ENCODE measurements at regions of chr10 and their contacts with region 1.

Region 1: GRCh38 chr10:99845837-99846382 is 63.5 kb downstream of the ABCC2 start:
- DNase-seq: peak; percentile 74 to 75
- H3K4me3 ChIP-seq: no peak overlapping the region
- H3K4me3 Mint-ChIP-seq: no peak overlapping the region
- H3K27ac Mint-ChIP-seq: no peak overlapping the region
- H3K4me1 ChIP-seq: peaks cover 19% of the 10 kb centered on the region
- H3K4me1 Mint-ChIP-seq: peaks cover 17% of the 10 kb centered on the region
- H3K27me3 ChIP-seq: no peaks in the 10 kb centered on the region
- H3K27me3 Mint-ChIP-seq: no peaks in the 10 kb centered on the region
- CTCF ChIP-seq: peak; percentile 84 to 86

Region 2: DNA sequence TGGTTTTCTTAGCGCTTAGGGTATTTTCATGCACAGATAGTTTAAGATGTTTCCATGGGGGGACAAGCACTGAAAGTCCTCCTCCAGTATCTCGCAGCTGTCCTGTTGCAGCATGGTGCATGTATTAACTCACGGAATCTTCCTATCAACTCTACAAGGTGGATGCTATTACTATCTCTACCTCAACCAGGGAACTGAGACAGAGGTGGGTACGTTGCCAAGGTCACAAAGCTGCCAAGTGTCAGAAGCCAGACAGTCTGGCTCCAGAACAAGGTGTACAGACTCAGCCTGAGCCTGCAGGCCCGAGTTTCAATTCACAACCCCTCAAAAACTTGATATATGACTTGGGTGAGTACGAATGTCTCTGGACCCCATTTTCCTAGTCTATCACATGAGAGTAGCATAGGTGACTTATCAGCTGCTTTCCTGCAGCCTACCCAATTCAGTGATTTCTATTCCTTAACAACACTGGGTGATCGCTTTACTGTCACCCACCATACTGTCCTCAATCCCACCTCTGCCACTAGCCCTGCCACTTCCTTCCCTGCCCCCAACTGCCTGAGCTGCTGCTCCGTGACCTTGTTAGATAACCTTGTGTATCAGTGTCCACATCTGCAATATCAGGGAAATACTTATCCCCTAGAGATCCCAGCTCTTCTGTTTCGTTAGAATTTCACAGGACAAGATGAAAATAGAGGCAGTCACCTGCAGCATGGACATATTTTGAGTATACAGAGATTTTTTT is 28.6 kb after region 1 on chr10:
- CTCF ChIA-PET with region 1: interaction called, 5 read pairs
- POLR2A ChIA-PET with region 1: no interaction called
- intact Hi-C with region 1: loop called (anchors 2 kb)
- DNase-seq: no peak
- H3K4me3 ChIP-seq: no peak overlapping the region
- H3K4me3 Mint-ChIP-seq: no peak overlapping the region
- H3K27ac Mint-ChIP-seq: no peak overlapping the region
- H3K4me1 ChIP-seq: peaks cover 16% of the 10 kb centered on the region
- H3K4me1 Mint-ChIP-seq: peaks cover 23% of the 10 kb centered on the region
- H3K27me3 ChIP-seq: no peaks in the 10 kb centered on the region
- H3K27me3 Mint-ChIP-seq: no peaks in the 10 kb centered on the region
- CTCF ChIP-seq: no peak

Region 3: DNA sequence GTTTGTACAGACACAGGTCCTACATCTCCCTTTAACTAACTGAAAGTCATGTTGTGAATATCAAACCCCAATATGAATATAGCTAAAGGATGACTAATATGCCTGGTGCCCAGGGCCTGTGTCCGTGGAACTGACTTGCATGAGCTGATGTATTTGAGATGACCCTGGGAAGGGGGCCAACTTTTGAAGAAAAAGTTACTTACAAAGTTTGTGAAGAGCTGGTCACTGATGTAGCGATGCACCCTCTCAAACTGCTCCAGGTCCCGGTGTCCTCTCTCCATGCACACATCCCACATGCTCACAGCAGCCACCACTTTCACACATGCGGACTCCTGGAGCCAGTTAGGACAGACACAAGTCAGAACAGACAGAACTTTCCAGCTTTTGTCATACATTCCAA is 42.7 kb after region 1 on chr10:
- CTCF ChIA-PET with region 1: no interaction called
- POLR2A ChIA-PET with region 1: no interaction called
- intact Hi-C with region 1: loop called (anchors 5 kb)
- DNase-seq: no peak
- H3K4me3 ChIP-seq: no peak overlapping the region
- H3K4me3 Mint-ChIP-seq: no peak overlapping the region
- H3K27ac Mint-ChIP-seq: no peak overlapping the region
- H3K4me1 ChIP-seq: no peaks in the 10 kb centered on the region
- H3K4me1 Mint-ChIP-seq: no peaks in the 10 kb centered on the region
- H3K27me3 ChIP-seq: no peaks in the 10 kb centered on the region
- H3K27me3 Mint-ChIP-seq: no peaks in the 10 kb centered on the region
- CTCF ChIP-seq: no peak

Region 4: DNA sequence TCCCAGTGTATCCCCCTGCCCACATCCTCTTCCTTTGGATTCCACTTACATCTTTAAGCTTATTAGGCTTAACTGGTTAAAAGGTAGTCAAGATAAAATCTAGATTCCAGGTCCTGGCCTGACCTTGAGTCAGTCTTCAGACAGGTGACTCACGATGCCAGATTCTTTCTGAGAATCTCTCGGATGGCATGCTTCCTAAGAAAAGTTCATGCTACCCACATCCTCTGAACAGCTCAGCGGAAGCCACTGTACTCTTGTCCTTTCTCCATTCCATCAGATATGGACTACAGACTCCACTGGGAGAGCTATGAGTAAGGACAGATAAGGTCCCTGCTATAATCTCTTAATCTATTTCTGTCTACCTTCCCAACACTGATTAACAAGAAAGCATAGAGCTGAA is 120.4 kb after region 1 on chr10:
- CTCF ChIA-PET with region 1: interaction called, 10 read pairs
- POLR2A ChIA-PET with region 1: interaction called, 3 read pairs
- intact Hi-C with region 1: loop called (anchors 2 kb)
- DNase-seq: peak; percentile 44 to 64
- H3K4me3 ChIP-seq: no peak overlapping the region
- H3K4me3 Mint-ChIP-seq: peak overlapping the region; percentile 34
- H3K27ac Mint-ChIP-seq: no peak overlapping the region
- H3K4me1 ChIP-seq: peaks cover 16% of the 10 kb centered on the region
- H3K4me1 Mint-ChIP-seq: peaks cover 14% of the 10 kb centered on the region
- H3K27me3 ChIP-seq: no peaks in the 10 kb centered on the region
- H3K27me3 Mint-ChIP-seq: no peaks in the 10 kb centered on the region
- CTCF ChIP-seq: no peak

Region 5: GRCh38 chr10:100100651-100101184 is 254.8 kb after region 1 on chr10:
- CTCF ChIA-PET with region 1: interaction called, 3 read pairs
- POLR2A ChIA-PET with region 1: no interaction called
- intact Hi-C with region 1: loop called (anchors 1 kb)
- DNase-seq: peak in 1 of 2 experiments; percentile 58
- H3K4me3 ChIP-seq: no peak overlapping the region
- H3K4me3 Mint-ChIP-seq: no peak overlapping the region
- H3K27ac Mint-ChIP-seq: no peak overlapping the region
- H3K4me1 ChIP-seq: peaks cover 19% of the 10 kb centered on the region
- H3K4me1 Mint-ChIP-seq: peaks cover 19% of the 10 kb centered on the region
- H3K27me3 ChIP-seq: no peaks in the 10 kb centered on the region
- H3K27me3 Mint-ChIP-seq: no peaks in the 10 kb centered on the region
- CTCF ChIP-seq: peak; percentile 40 to 72

Region 6: DNA sequence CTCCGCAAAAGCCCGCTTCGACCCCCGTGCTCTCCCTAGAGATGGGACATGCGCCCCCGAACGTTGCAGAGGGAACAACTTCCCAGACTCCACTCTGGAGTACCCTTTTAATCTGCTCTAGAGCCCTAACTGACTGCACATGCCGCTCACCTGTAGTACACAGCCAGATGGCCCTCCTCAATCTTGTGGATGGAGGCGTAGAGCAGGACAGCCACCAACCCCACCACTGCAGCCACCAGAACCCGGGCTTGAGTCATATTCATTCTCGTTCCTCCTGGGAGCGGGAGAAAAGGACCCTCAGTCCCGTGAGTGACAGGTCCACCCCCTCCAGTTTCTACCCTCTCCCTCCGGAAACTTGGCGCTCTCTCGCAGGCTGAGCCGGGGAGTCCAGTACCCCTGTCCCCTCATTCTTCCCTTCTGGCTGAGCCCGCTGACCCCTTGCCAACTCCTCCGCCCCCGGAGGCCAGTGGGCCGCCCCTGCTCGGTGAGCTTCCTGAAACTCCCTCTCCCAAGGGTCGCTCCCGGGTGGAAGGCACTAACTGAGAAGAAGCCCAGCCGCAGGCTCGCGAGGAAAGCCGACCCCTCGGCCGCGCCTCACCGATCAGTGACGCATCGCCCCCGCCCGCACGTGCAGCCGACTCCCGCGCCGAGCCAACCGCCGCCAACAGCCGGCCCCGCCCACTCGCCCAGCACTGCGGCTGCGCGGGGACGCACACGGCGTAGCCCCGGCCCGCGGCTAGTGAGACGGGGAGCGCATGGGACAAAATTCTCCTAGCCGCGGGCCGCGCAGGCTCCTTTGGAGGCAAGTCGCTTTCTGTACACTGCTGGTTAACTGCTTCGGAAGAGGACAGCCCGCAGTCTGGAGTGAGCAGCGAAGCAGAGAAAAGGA is 339.7 kb after region 1 on chr10 and contains the start of gene ERLIN1:
- CTCF ChIA-PET with region 1: no interaction called
- POLR2A ChIA-PET with region 1: no interaction called
- intact Hi-C with region 1: loop called (anchors 5 kb)
- DNase-seq: peak; percentile 90 to 97
- H3K4me3 ChIP-seq: peak within 1 kb of the TSS; percentile 71
- H3K4me3 Mint-ChIP-seq: peak within 1 kb of the TSS; percentile 76
- H3K27ac Mint-ChIP-seq: peak within 1 kb of the TSS; percentile 83
- H3K4me1 ChIP-seq: peaks cover 24% of the 10 kb centered on the region
- H3K4me1 Mint-ChIP-seq: peaks cover 35% of the 10 kb centered on the region
- H3K27me3 ChIP-seq: no peaks in the 10 kb centered on the region
- H3K27me3 Mint-ChIP-seq: no peaks in the 10 kb centered on the region
- CTCF ChIP-seq: no peak
- total RNA-seq, gene ERLIN1: 54.4 and 59.0 TPM in 2 replicates